CD8-positive, alpha-beta T cell (primary cell): ENCODE measurements at regions of chr7 and their contacts with region 1.

Region 1: DNA sequence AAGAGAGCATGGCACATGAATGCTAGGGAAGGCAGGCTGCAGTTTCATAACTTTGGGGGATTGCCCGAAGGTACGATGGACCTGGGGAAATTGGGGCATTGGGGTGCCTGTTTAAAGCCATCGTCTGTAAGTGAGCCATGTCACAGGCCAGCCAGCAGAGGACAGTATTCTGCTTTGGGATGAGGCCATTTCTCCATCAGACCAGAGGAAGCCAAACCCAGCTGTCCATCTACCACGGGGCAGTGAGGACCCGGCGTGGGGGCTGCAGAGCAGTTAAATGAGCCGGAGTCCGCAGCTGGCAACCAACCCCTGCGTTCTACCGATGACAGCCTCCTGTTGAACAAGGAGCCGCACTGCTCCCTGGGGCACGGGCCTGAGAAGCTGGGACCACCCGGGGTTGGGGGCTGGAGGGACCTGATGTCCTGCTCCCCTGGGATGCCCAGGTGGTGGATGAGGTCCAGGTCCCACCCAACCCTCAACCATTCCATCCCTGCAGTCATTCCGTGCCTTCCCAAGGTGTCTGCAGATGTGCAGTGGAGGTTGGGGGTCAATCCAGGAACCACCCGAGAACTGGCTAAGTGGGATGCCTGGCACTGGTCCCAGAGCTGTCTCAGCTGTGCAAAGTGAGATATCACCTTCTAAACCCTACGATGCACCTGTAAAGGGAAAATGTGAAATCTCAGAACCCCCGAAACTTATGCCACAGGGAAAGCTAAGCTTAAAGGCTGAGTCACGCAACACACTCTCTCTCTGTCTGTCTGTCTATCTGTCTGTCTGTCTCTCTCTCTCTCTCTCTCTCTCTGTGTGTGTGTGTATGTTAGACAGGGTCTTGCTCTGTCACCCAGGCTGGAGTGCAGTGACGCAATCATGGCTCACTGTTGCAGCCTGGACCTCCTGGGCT is 12.1 kb upstream of the RHBDD2 start:
- DNase-seq: peak in 8 of 9 experiments; percentile 20 to 73 (median 44)
- ATAC-seq: peak; percentile 85
- H3K4me3 ChIP-seq: no peak overlapping the region
- H3K4me3 Mint-ChIP-seq: no peak overlapping the region
- H3K27ac ChIP-seq: no peak overlapping the region
- H3K27ac Mint-ChIP-seq: no peak overlapping the region
- H3K4me1 ChIP-seq: no peaks in the 10 kb centered on the region
- H3K4me1 Mint-ChIP-seq: peaks cover 8% of the 10 kb centered on the region
- H3K27me3 ChIP-seq: peaks cover 0 to 3% of the 10 kb centered on the region in 2 experiments
- H3K27me3 Mint-ChIP-seq: peaks cover 16% of the 10 kb centered on the region
- CTCF ChIP-seq: peak; percentile 62

Region 2: GRCh38 chr7:76133164-76133775 is 266.5 kb after region 1 on chr7:
- CTCF ChIA-PET with region 1: no interaction called
- POLR2A ChIA-PET with region 1: no interaction called
- intact Hi-C with region 1: loop called in 1 of 2 experiments (anchors 10 kb)
- DNase-seq: peak in 1 of 9 experiments; percentile 32
- ATAC-seq: no peak
- H3K4me3 ChIP-seq: no peak overlapping the region
- H3K4me3 Mint-ChIP-seq: peak overlapping the region; percentile 72
- H3K27ac ChIP-seq: peak overlapping the region; percentile 17 to 21
- H3K27ac Mint-ChIP-seq: peak overlapping the region; percentile 72
- H3K4me1 ChIP-seq: peaks cover 12% of the 10 kb centered on the region
- H3K4me1 Mint-ChIP-seq: peaks cover 14% of the 10 kb centered on the region
- H3K27me3 ChIP-seq: no peaks in the 10 kb centered on the region
- H3K27me3 Mint-ChIP-seq: peaks cover 16% of the 10 kb centered on the region
- CTCF ChIP-seq: no peak